ENCODE measurements at regions of chr22 and their contacts with region 1.

Region 1: DNA sequence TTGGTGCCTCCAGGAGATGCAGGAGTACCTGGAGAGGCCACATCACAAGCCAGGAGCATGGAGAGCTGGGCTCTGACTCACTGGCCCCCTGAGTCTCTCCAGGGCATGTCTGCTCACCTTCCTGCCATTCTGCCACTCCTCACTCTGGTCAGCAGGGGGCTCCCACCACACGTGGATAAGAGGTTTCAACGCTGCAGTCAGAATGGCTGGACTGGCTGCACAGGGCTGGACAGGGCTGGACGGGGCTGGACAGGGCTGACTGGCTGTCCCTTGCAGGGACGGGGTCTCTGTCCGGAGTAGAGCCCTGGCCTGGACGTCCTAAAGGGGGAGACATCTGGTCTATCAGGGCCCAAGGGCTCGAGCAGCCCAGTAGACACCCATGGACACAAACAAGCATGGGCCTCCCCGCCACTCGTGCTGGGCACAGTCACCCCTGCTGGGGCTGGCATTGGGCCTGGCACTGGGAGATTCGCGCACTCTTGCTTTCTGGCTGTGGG is 34.6 kb downstream of the CYTH4 start:
- DNase-seq: peak; percentile 60 to 87
- ATAC-seq: peak; percentile 80 to 91 (median 82)
- H3K4me3 ChIP-seq: no peak overlapping the region
- H3K4me3 Mint-ChIP-seq: no peak overlapping the region
- H3K27ac ChIP-seq: no peak overlapping the region
- H3K27ac Mint-ChIP-seq: no peak overlapping the region
- H3K4me1 ChIP-seq: peaks cover 39% of the 10 kb centered on the region
- H3K4me1 Mint-ChIP-seq: peaks cover 28 to 47% of the 10 kb centered on the region in 2 donors
- H3K27me3 ChIP-seq: no peaks in the 10 kb centered on the region
- H3K27me3 Mint-ChIP-seq: peaks cover 0 to 4% of the 10 kb centered on the region in 2 donors
- CTCF ChIP-seq: peak; percentile 77

Region 2: GRCh38 chr22:37492428-37493344 is 175.8 kb after region 1 on chr22:
- intact Hi-C with region 1: loop called (anchors 10 kb)
- DNase-seq: peak; percentile 26 to 76
- ATAC-seq: peak; percentile 62 to 88 (median 80)
- H3K4me3 ChIP-seq: no peak overlapping the region
- H3K4me3 Mint-ChIP-seq: no peak overlapping the region
- H3K27ac ChIP-seq: no peak overlapping the region
- H3K27ac Mint-ChIP-seq: peak overlapping the region in 1 of 2 donors; percentile 56
- H3K4me1 ChIP-seq: peaks cover 21% of the 10 kb centered on the region
- H3K4me1 Mint-ChIP-seq: peaks cover 19 to 32% of the 10 kb centered on the region in 2 donors
- H3K27me3 ChIP-seq: no peaks in the 10 kb centered on the region
- H3K27me3 Mint-ChIP-seq: peaks cover 0 to 5% of the 10 kb centered on the region in 2 donors
- CTCF ChIP-seq: peak; percentile 39

Region 3: GRCh38 chr22:37777122-37777687 is 460.3 kb after region 1 on chr22:
- intact Hi-C with region 1: no loop called
- DNase-seq: no peak
- ATAC-seq: no peak
- H3K4me3 ChIP-seq: no peak overlapping the region
- H3K4me3 Mint-ChIP-seq: no peak overlapping the region
- H3K27ac ChIP-seq: no peak overlapping the region
- H3K27ac Mint-ChIP-seq: no peak overlapping the region
- H3K4me1 ChIP-seq: peaks cover 8% of the 10 kb centered on the region
- H3K4me1 Mint-ChIP-seq: peaks cover 0 to 1% of the 10 kb centered on the region in 2 donors
- H3K27me3 ChIP-seq: no peaks in the 10 kb centered on the region
- H3K27me3 Mint-ChIP-seq: no peaks in the 10 kb centered on the region
- CTCF ChIP-seq: no peak